ENCODE measurements at regions of chr11 and their contacts with region 1.

Region 1: GRCh38 chr11:59135648-59136461 is 6.8 kb upstream of the FAM111A start:
- DNase-seq: peak; percentile 59 to 99
- H3K4me3 ChIP-seq: no peak overlapping the region
- H3K27ac ChIP-seq: no peak overlapping the region; the same call in 1 of the 2 replicates
- H3K4me1 ChIP-seq: no peaks in the 10 kb centered on the region
- H3K27me3 ChIP-seq: no peaks in the 10 kb centered on the region
- CTCF ChIP-seq: peak; percentile 96 to 98 (median 97)
- EP300 ChIP-seq: no peak
- POLR2A ChIP-seq: no peak
- RAD21 ChIP-seq: peak; percentile 97 to 98

Region 2: GRCh38 chr11:58958500-58958899 is 177.4 kb before region 1 on chr11:
- CTCF ChIA-PET with region 1: interaction called, 10 read pairs
- POLR2A ChIA-PET with region 1: interaction called, 4 read pairs
- DNase-seq: peak; percentile 1 to 72
- H3K4me3 ChIP-seq: no peak overlapping the region
- H3K27ac ChIP-seq: no peak overlapping the region
- H3K4me1 ChIP-seq: peaks cover 0 to 4% (median 0%) of the 10 kb centered on the region in 4 experiments; a peak in 1 of 7 replicates
- H3K27me3 ChIP-seq: peaks cover 0 to 3% (median 0%) of the 10 kb centered on the region in 4 experiments; a peak in 1 of 7 replicates
- CTCF ChIP-seq: peak in 2 of 3 experiments; percentile 27 to 47; a peak in 2 of 4 replicates
- EP300 ChIP-seq: no peak
- POLR2A ChIP-seq: no peak
- RAD21 ChIP-seq: no peak; a peak in 1 of 4 replicates

Region 3: DNA sequence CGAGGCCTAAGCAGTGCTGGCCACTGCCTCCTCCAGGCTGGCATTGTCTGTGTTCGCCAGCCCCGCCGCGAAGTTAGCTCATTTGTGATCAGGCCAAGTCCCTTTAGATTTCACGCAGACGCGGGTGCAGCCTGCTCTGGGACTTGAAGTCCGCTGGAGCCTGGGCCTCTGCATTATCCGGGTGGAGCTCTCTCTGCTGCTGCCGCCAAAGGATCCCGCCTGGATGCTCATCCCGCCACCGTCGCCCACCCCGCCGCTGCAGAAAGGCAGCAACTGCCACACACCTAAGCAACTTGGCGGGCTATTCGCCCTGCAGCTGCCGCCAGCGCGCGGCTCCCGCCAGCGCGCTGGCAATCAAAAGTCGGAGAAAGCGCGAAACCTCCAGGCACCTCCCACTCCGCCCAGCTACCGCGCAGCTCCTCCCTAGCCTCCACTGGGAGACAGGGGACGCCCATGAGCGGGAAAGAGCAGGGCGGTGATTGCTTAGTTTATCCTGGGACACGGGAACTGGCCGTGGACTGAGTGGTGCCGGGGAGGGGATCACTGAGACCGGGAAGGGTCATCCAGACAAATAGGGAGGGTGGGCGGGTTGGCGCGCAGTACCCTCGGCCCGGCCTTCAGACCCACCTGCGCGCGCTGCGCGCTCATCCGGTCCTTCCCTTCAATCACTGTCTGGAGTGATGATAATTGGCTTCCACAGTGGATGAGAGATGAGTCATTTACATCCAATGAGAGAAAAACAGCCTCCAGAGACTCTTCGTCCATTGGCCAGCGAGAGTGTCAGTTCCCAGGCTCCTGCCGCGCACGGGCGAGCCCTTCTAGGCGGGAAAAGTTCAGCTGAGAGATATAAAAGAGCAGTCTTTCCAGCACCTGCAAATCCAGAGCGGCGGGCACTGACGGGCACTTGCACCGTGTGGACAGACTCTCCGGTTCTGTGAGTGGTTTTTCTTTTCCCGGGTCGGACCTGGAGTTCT is 29.2 kb before region 1 on chr11 and contains the start of gene FAM111B:
- CTCF ChIA-PET with region 1: interaction called, 14 read pairs
- POLR2A ChIA-PET with region 1: interaction called, 3 read pairs
- DNase-seq: peak in 1 of 2 experiments; percentile 83
- H3K4me3 ChIP-seq: peak within 1 kb of the TSS; percentile 46 to 65 (median 62)
- H3K27ac ChIP-seq: peak within 1 kb of the TSS; percentile 61; the same call in 1 of the 2 replicates
- H3K4me1 ChIP-seq: peaks cover 0 to 4% (median 2%) of the 10 kb centered on the region in 4 experiments; a peak in 3 of 7 replicates
- H3K27me3 ChIP-seq: peaks cover 0 to 9% (median 5%) of the 10 kb centered on the region in 4 experiments; a peak in 3 of 7 replicates
- CTCF ChIP-seq: peak in 1 of 3 experiments; percentile 12; a peak in 1 of 4 replicates
- EP300 ChIP-seq: no peak
- POLR2A ChIP-seq: peak; percentile 46 to 71; a peak in 2 of 3 replicates
- RAD21 ChIP-seq: no peak
- total RNA-seq, gene FAM111B: 38.1 and 40.0 TPM in 2 replicates

Region 4: GRCh38 chr11:59115553-59115952 is 20.3 kb before region 1 on chr11:
- CTCF ChIA-PET with region 1: interaction called, 13 read pairs
- POLR2A ChIA-PET with region 1: no interaction called
- DNase-seq: no peak
- H3K4me3 ChIP-seq: no peak overlapping the region
- H3K27ac ChIP-seq: no peak overlapping the region
- H3K4me1 ChIP-seq: no peaks in the 10 kb centered on the region
- H3K27me3 ChIP-seq: no peaks in the 10 kb centered on the region
- CTCF ChIP-seq: no peak
- EP300 ChIP-seq: no peak
- POLR2A ChIP-seq: no peak
- RAD21 ChIP-seq: no peak

Region 5: GRCh38 chr11:59158206-59159068 is 22.6 kb after region 1 on chr11:
- CTCF ChIA-PET with region 1: interaction called, 20 read pairs
- POLR2A ChIA-PET with region 1: no interaction called
- DNase-seq: peak in 1 of 2 experiments; percentile 67
- H3K4me3 ChIP-seq: no peak overlapping the region
- H3K27ac ChIP-seq: no peak overlapping the region; the same call in 1 of the 2 replicates
- H3K4me1 ChIP-seq: peaks cover 0 to 4% (median 0%) of the 10 kb centered on the region in 4 experiments; a peak in 2 of 7 replicates
- H3K27me3 ChIP-seq: no peaks in the 10 kb centered on the region
- CTCF ChIP-seq: peak; percentile 29 to 87 (median 80)
- EP300 ChIP-seq: no peak
- POLR2A ChIP-seq: no peak
- RAD21 ChIP-seq: peak; percentile 91 to 92

Measured in H1 (cell line).